Upper lobe of right lung (tissue), 1 donor: ENCODE measurements at regions of chr3 and their contacts with region 1.

Region 1: GRCh38 chr3:14261229-14261628 is 82.6 kb downstream of the LSM3 start:
- DNase-seq: peak; percentile 89
- ATAC-seq: peak; percentile 95
- H3K4me3 ChIP-seq: no peak overlapping the region
- H3K27ac ChIP-seq: no peak overlapping the region
- H3K4me1 ChIP-seq: peaks cover 4% of the 10 kb centered on the region
- H3K27me3 ChIP-seq: no peaks in the 10 kb centered on the region
- CTCF ChIP-seq: peak; percentile 97

Region 2: GRCh38 chr3:14410503-14411165 is 149.4 kb after region 1 on chr3:
- intact Hi-C with region 1: no loop called
- DNase-seq: peak; percentile 76
- ATAC-seq: peak; percentile 83
- H3K4me3 ChIP-seq: no peak overlapping the region
- H3K27ac ChIP-seq: peak overlapping the region; percentile 78
- H3K4me1 ChIP-seq: peaks cover 50% of the 10 kb centered on the region
- H3K27me3 ChIP-seq: no peaks in the 10 kb centered on the region
- CTCF ChIP-seq: no peak

Region 3: GRCh38 chr3:14467814-14468620 is 206.8 kb after region 1 on chr3:
- intact Hi-C with region 1: loop called (anchors 5 kb)
- DNase-seq: no peak
- ATAC-seq: peak; percentile 65
- H3K4me3 ChIP-seq: no peak overlapping the region
- H3K27ac ChIP-seq: no peak overlapping the region
- H3K4me1 ChIP-seq: peaks cover 7% of the 10 kb centered on the region
- H3K27me3 ChIP-seq: no peaks in the 10 kb centered on the region
- CTCF ChIP-seq: peak; percentile 84